ENCODE measurements at regions of chr2 and their contacts with region 1.

Region 1: DNA sequence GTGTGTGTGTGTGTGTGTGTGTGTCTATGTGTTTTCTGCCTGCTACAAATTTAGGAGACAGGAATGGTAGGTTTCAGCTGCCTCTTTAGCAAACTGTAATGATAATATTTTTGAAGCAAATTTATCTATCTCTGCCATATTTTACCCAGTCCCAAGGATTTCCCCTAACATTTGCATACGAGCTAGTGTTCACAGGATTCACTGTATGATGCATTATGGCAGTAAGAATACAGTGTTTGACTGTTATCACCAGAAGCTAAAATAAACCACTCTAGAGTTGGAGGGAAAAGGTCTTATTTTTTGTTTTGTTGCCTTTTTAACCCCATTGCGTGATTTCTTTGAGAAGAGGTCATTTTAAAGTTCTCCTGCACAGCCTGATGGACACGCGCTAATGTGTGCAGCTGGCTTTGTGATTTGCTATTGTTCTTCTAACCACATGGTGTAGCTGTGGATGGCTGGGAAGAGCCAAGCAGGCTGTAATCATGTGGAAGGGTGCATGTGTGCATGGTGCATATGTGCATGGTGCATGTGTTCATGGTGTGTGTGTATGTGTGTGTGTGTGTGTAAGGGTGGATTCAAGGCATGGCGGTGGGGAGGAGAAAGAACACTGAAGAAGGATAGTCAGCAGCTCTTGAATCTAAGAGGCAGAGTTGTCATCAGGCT is 62.4 kb downstream of the PLB1 start:
- DNase-seq: no peak
- H3K4me3 ChIP-seq: no peak overlapping the region
- H3K27ac ChIP-seq: no peak overlapping the region
- H3K27me3 ChIP-seq: no peaks in the 10 kb centered on the region
- CTCF ChIP-seq: no peak

Region 2: GRCh38 chr2:28796620-28797019 is 238.3 kb after region 1 on chr2:
- CTCF ChIA-PET with region 1: no interaction called
- POLR2A ChIA-PET with region 1: interaction called, 10 read pairs
- DNase-seq: no peak
- H3K4me3 ChIP-seq: no peak overlapping the region
- H3K27ac ChIP-seq: no peak overlapping the region
- H3K27me3 ChIP-seq: no peaks in the 10 kb centered on the region
- CTCF ChIP-seq: no peak